ENCODE measurements at regions of chr16 and their contacts with region 1.

Region 1: GRCh38 chr16:66886346-66886745 is 6.0 kb downstream of the PDP2 start:
- DNase-seq: peak in 1 of 2 experiments; percentile 52
- H3K4me3 ChIP-seq: peak overlapping the region; percentile 11; the same call in 1 of the 2 replicates
- H3K27ac ChIP-seq: peak overlapping the region; percentile 51; the same call in 1 of the 2 replicates
- H3K4me1 ChIP-seq: peaks cover 20% of the 10 kb centered on the region
- H3K27me3 ChIP-seq: no peaks in the 10 kb centered on the region
- CTCF ChIP-seq: no peak

Region 2: GRCh38 chr16:66977341-66978113 is 91.2 kb after region 1 on chr16:
- CTCF ChIA-PET with region 1: interaction called, 14 read pairs
- POLR2A ChIA-PET with region 1: no interaction called
- intact Hi-C with region 1: no loop called
- DNase-seq: peak; percentile 62 to 82
- H3K4me3 ChIP-seq: no peak overlapping the region
- H3K27ac ChIP-seq: no peak overlapping the region
- H3K4me1 ChIP-seq: no peaks in the 10 kb centered on the region
- H3K27me3 ChIP-seq: no peaks in the 10 kb centered on the region
- CTCF ChIP-seq: peak; percentile 96